Endothelial cell of umbilical vein (primary cell): ENCODE measurements at regions of chr12 and their contacts with region 1.

Region 1: GRCh38 chr12:34016361-34016760 is 5.9 kb upstream of the ALG10 start:
- DNase-seq: no peak
- H3K4me3 ChIP-seq: no peak overlapping the region
- H3K27ac ChIP-seq: no peak overlapping the region
- H3K4me1 ChIP-seq: peaks cover 2% of the 10 kb centered on the region
- H3K27me3 ChIP-seq: peaks cover 0 to 3% of the 10 kb centered on the region in 2 experiments
- CTCF ChIP-seq: no peak
- POLR2A ChIP-seq: no peak

Region 2: GRCh38 chr12:32794281-32794680 is 1222.1 kb before region 1 on chr12:
- CTCF ChIA-PET with region 1: no interaction called
- POLR2A ChIA-PET with region 1: no interaction called
- dilution Hi-C with region 1: no loop called
- intact Hi-C with region 1: loop called (anchors 10 kb)
- DNase-seq: no peak
- H3K4me3 ChIP-seq: no peak overlapping the region
- H3K27ac ChIP-seq: no peak overlapping the region
- H3K4me1 ChIP-seq: no peaks in the 10 kb centered on the region
- H3K27me3 ChIP-seq: no peaks in the 10 kb centered on the region
- CTCF ChIP-seq: no peak
- POLR2A ChIP-seq: no peak

Region 3: DNA sequence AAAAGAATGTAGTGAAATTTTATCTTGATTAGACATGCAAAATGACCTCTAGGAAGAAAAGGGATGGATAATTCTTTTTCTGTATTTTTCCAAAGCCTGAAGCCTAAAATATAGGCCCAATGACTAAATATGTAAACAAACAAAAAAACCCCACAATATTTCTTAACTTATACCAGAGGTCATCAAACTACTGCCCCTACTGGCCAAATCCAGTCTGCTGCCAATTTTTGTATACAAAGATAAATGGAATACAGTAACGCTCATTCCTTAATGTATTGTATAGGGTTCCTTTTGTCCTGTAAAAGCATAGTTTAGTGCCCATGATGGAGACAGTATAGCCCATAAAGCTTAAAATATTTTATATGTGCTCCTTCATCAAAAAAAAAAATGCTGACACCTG is 139.7 kb before region 1 on chr12:
- CTCF ChIA-PET with region 1: no interaction called
- POLR2A ChIA-PET with region 1: no interaction called
- dilution Hi-C with region 1: no loop called
- intact Hi-C with region 1: no loop called
- DNase-seq: no peak
- H3K4me3 ChIP-seq: no peak overlapping the region
- H3K27ac ChIP-seq: no peak overlapping the region
- H3K4me1 ChIP-seq: no peaks in the 10 kb centered on the region
- H3K27me3 ChIP-seq: no peaks in the 10 kb centered on the region
- CTCF ChIP-seq: no peak
- POLR2A ChIP-seq: no peak

Region 4: GRCh38 chr12:33994857-33995808 is 21.2 kb before region 1 on chr12:
- CTCF ChIA-PET with region 1: no interaction called
- POLR2A ChIA-PET with region 1: no interaction called
- dilution Hi-C with region 1: no loop called
- intact Hi-C with region 1: no loop called
- DNase-seq: no peak
- H3K4me3 ChIP-seq: no peak overlapping the region
- H3K27ac ChIP-seq: no peak overlapping the region
- H3K4me1 ChIP-seq: no peaks in the 10 kb centered on the region
- H3K27me3 ChIP-seq: no peaks in the 10 kb centered on the region
- CTCF ChIP-seq: no peak
- POLR2A ChIP-seq: no peak